Astrocyte of the cerebellum (primary cell): ENCODE measurements at regions of chr16 and their contacts with region 1.

Region 1: GRCh38 chr16:67917852-67918236 is 13.8 kb downstream of the CTRL start:
- DNase-seq: no peak
- H3K4me3 ChIP-seq: no peak overlapping the region
- CTCF ChIP-seq: no peak

Region 2: DNA sequence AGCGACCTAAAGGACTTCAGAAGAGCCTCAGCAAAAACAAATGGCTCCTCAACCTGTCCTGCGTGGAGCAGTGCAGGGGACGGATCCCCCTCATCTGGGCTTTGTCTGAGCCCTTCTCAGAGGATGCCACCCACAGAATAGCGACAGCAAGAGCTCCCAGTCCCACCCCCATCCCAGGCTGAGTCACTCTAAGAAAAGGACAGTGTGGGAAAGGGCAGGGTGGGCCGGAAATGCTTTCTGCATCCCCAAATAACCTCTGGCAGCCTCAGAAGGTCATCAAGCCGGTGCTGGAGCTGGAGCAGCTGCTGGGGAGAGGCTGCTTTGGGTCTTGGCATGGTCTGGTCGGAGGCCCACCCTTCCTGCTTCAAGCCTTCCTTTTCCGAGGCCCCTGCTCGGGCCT is 41.7 kb after region 1 on chr16:
- in situ Hi-C with region 1: no loop called
- DNase-seq: no peak
- H3K4me3 ChIP-seq: no peak overlapping the region
- CTCF ChIP-seq: no peak

Region 3: GRCh38 chr16:67987460-67988160 is 69.8 kb after region 1 on chr16:
- in situ Hi-C with region 1: no loop called
- DNase-seq: no peak
- H3K4me3 ChIP-seq: no peak overlapping the region
- CTCF ChIP-seq: no peak

Region 4: DNA sequence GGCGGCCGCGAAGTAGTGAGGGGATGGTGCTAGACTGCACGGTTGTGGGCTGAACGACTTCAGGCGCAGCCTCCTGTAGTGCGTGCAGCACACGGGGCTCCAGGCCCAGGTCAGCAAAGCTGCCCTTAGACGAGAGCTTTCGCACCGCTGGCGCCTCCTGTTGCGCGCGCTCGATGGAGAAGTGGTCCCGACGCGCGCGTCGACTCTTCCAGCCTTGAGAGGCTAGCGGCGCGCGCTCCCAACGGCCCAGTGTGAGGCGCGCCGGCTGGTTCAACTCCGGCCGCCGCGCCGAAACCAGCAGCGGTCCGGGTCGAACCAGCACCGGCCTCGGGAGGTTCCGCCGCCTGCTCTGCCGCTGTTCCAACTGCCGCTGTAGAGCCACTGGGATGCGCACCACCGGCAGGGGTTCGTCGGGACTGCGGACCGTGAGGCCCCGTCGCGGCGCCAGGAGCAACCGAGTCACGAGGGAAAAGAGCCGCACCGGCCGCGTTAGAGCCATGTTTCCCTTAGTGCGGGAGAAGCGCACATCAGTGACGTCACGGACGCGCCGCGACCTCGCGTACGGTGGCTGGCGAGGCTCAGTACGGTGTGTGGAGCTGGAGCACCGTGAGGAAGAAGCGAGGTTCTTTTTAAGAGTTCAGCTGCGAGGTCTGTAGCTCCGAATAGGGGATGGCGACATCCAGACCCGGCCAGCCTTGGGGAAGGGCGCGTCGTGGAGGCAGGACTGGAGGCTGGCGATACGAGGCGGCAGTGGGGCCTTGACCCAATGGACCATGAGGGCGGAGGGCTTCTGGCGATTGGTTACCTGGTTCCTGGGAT is 105.1 kb after region 1 on chr16 and contains the starts of genes DDX28 and DUS2:
- in situ Hi-C with region 1: loop called (anchors 25 kb)
- DNase-seq: peak; percentile 84
- H3K4me3 ChIP-seq: peak within 1 kb of the TSS; percentile 98
- CTCF ChIP-seq: no peak